SK-N-SH (cell line): ENCODE measurements at regions of chr1 and their contacts with region 1.

Region 1: GRCh38 chr1:113677250-113678158 is 81.8 kb downstream of the PHTF1 start:
- DNase-seq: peak; percentile 74
- H3K4me3 ChIP-seq: no peak overlapping the region; a peak in 1 of 4 replicates
- H3K27ac ChIP-seq: peak overlapping the region; percentile 27 to 73; a peak in 3 of 4 replicates
- H3K4me1 ChIP-seq: peaks cover 12 to 19% of the 10 kb centered on the region in 2 experiments; a peak in 3 of 4 replicates
- H3K27me3 ChIP-seq: no peaks in the 10 kb centered on the region
- CTCF ChIP-seq: peak; percentile 76
- EP300 ChIP-seq: no peak
- RAD21 ChIP-seq: peak; percentile 83

Region 2: GRCh38 chr1:113140588-113141446 is 536.7 kb before region 1 on chr1:
- CTCF ChIA-PET with region 1: interaction called, 32 read pairs
- POLR2A ChIA-PET with region 1: no interaction called
- DNase-seq: peak; percentile 66
- H3K4me3 ChIP-seq: no peak overlapping the region; a peak in 1 of 4 replicates
- H3K27ac ChIP-seq: peak overlapping the region in 1 of 2 experiments; percentile 85; a peak in 2 of 4 replicates
- H3K4me1 ChIP-seq: peaks cover 21 to 36% of the 10 kb centered on the region in 2 experiments; a peak in 3 of 4 replicates
- H3K27me3 ChIP-seq: no peaks in the 10 kb centered on the region
- CTCF ChIP-seq: peak; percentile 93
- EP300 ChIP-seq: peak in 1 of 2 experiments; percentile 3; a peak in 1 of 4 replicates
- RAD21 ChIP-seq: peak; percentile 98

Region 3: GRCh38 chr1:113887402-113888175 is 210.1 kb after region 1 on chr1 and contains the start of gene BCL2L15:
- CTCF ChIA-PET with region 1: no interaction called
- POLR2A ChIA-PET with region 1: no interaction called
- DNase-seq: no peak
- H3K4me3 ChIP-seq: no peak within 1 kb of the TSS
- H3K27ac ChIP-seq: no peak within 1 kb of the TSS
- H3K4me1 ChIP-seq: no peaks in the 10 kb centered on the region
- H3K27me3 ChIP-seq: no peaks in the 10 kb centered on the region
- CTCF ChIP-seq: no peak
- EP300 ChIP-seq: no peak
- RAD21 ChIP-seq: no peak
- polyA plus RNA-seq, gene BCL2L15: 0.02 and 0.05 TPM in 2 replicates